ENCODE measurements at regions of chr3 and their contacts with region 1.

Region 1: GRCh38 chr3:119579366-119580165 is at the start of gene ADPRH:
- DNase-seq: peak; percentile 85 to 92
- ATAC-seq: peak; percentile 95
- H3K4me3 ChIP-seq: peak within 1 kb of the TSS; percentile 49 to 83
- H3K27ac ChIP-seq: peak within 1 kb of the TSS; percentile 23 to 87
- H3K4me1 ChIP-seq: no peaks in the 10 kb centered on the region
- H3K27me3 ChIP-seq: no peaks in the 10 kb centered on the region
- total RNA-seq, gene ADPRH: 13.6 to 13.9 TPM

Region 2: DNA sequence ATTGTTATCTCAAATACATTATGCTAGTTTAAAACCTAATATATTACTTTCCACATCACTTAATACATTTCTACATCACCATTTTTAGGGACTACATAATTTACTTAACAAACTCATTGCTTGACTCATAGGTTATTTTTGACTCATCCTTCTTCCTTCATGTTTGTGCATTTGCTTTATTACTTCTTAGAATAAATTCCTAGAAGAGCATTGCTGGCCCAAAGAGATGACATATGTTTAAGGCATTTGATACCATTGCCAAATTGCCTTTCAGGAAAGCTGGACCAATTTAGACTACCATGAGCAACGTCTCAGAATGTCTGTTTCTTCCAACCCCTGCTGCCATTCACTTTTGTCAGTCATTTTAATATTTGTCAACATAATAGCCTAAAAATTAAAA is 1450.7 kb before region 1 on chr3:
- intact Hi-C with region 1: no loop called
- DNase-seq: no peak
- ATAC-seq: no peak
- H3K4me3 ChIP-seq: no peak overlapping the region
- H3K27ac ChIP-seq: no peak overlapping the region
- H3K4me1 ChIP-seq: no peaks in the 10 kb centered on the region
- H3K27me3 ChIP-seq: no peaks in the 10 kb centered on the region

Region 3: GRCh38 chr3:119184796-119185570 is 394.6 kb before region 1 on chr3:
- intact Hi-C with region 1: no loop called
- DNase-seq: no peak
- ATAC-seq: no peak
- H3K4me3 ChIP-seq: no peak overlapping the region
- H3K27ac ChIP-seq: no peak overlapping the region
- H3K4me1 ChIP-seq: no peaks in the 10 kb centered on the region
- H3K27me3 ChIP-seq: no peaks in the 10 kb centered on the region

Region 4: GRCh38 chr3:119628816-119629445 is 49.4 kb after region 1 on chr3:
- intact Hi-C with region 1: loop called in 1 of 2 experiments (anchors 5 kb)
- DNase-seq: no peak
- ATAC-seq: no peak
- H3K4me3 ChIP-seq: no peak overlapping the region
- H3K27ac ChIP-seq: peak overlapping the region in 1 of 2 donors; percentile 54
- H3K4me1 ChIP-seq: peaks cover 0 to 3% of the 10 kb centered on the region in 2 donors
- H3K27me3 ChIP-seq: no peaks in the 10 kb centered on the region

Region 5: GRCh38 chr3:119669906-119670570 is 90.5 kb after region 1 on chr3:
- intact Hi-C with region 1: loop called in 1 of 2 experiments (anchors 1 kb)
- DNase-seq: no peak
- ATAC-seq: no peak
- H3K4me3 ChIP-seq: no peak overlapping the region
- H3K27ac ChIP-seq: no peak overlapping the region
- H3K4me1 ChIP-seq: peaks cover 2 to 3% of the 10 kb centered on the region in 2 donors
- H3K27me3 ChIP-seq: no peaks in the 10 kb centered on the region

Region 6: DNA sequence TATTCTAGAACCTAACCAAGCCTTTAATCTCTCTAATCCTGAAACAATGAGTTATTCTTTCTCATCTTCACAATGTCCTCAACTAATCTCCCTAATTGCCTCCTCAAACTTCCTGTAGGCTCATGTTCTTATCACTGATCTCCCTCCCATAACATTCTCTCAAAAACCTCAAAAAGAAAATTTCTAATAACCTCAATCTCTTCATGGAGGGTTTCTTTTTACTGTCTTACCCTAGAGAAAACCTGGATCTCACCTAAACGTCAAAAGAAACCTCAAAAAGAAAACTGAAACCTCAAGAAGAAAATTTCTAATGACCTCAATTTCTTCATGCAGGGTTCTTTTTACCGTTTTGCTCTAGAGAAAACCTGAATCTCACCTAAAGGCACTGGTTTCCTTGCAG is 364.5 kb after region 1 on chr3:
- intact Hi-C with region 1: no loop called
- DNase-seq: no peak
- ATAC-seq: no peak
- H3K4me3 ChIP-seq: no peak overlapping the region
- H3K27ac ChIP-seq: no peak overlapping the region
- H3K4me1 ChIP-seq: no peaks in the 10 kb centered on the region
- H3K27me3 ChIP-seq: no peaks in the 10 kb centered on the region